Naive thymus-derived CD4-positive, alpha-beta T cell (primary cell): ENCODE measurements at regions of chr14 and their contacts with region 1.

Region 1: DNA sequence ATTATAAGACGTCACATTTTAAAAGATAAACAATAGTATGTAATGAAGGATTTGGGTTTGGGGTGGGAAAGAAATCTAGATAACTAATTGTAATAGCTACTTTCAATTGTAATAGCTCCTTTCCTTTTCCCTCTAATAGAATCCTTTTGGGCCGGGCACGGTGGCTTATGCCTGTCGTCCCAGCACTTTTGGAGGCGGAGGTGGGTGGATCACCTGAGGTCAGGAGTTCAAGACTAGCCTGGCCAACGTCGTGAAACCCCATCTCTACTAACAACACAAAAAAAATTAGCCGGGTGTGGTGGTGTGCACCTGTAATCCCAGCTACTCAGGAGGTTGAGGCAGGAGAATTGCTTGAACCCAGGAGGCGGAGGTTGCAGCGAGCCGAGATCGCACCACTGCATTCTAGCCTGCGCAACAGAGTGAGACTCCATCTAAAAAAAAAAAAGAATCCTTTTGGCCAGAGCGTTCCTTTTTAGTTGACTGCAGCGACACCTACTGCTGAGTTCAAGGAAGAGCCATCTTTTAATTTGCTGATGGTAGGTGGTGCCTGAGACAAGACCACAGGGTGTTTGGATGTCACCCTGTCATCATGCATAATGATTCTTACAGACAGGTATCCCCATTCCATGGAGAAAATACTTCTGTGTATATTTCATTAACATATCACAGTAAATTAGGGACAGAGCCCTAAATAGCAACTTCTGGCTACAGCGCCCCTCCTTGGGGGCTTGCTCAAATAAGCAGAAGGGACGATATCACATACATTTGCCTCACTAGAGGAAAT is 79.5 kb downstream of the ARMH4 start:
- DNase-seq: peak in 8 of 9 donors; percentile 3 to 52 (median 36)
- ATAC-seq: peak; percentile 78
- H3K4me3 ChIP-seq: no peak overlapping the region
- H3K4me3 Mint-ChIP-seq: peak overlapping the region in 2 of 10 donors; percentile 40 to 52
- H3K27ac ChIP-seq: no peak overlapping the region
- H3K27ac Mint-ChIP-seq: no peak overlapping the region
- H3K4me1 ChIP-seq: no peaks in the 10 kb centered on the region
- H3K4me1 Mint-ChIP-seq: no peaks in the 10 kb centered on the region
- H3K27me3 ChIP-seq: no peaks in the 10 kb centered on the region
- H3K27me3 Mint-ChIP-seq: peaks cover 4 to 17% (median 9%) of the 10 kb centered on the region in 5 donors

Region 2: GRCh38 chr14:57486767-57487379 is 585.6 kb before region 1 on chr14:
- CTCF ChIA-PET with region 1: no interaction called
- POLR2A ChIA-PET with region 1: no interaction called
- intact Hi-C with region 1: loop called in 1 of 2 experiments (anchors 1 kb)
- DNase-seq: peak in 2 of 9 donors; percentile 1 to 2
- ATAC-seq: no peak
- H3K4me3 ChIP-seq: no peak overlapping the region
- H3K4me3 Mint-ChIP-seq: no peak overlapping the region
- H3K27ac ChIP-seq: no peak overlapping the region
- H3K27ac Mint-ChIP-seq: no peak overlapping the region
- H3K4me1 ChIP-seq: no peaks in the 10 kb centered on the region
- H3K4me1 Mint-ChIP-seq: peaks cover 0 to 3% (median 0%) of the 10 kb centered on the region in 7 donors
- H3K27me3 ChIP-seq: no peaks in the 10 kb centered on the region
- H3K27me3 Mint-ChIP-seq: peaks cover 2 to 8% (median 6%) of the 10 kb centered on the region in 5 donors

Region 3: GRCh38 chr14:57533214-57533613 is 539.3 kb before region 1 on chr14:
- CTCF ChIA-PET with region 1: no interaction called
- POLR2A ChIA-PET with region 1: no interaction called
- intact Hi-C with region 1: loop called in 1 of 2 experiments (anchors 2 kb)
- DNase-seq: no peak
- ATAC-seq: no peak
- H3K4me3 ChIP-seq: no peak overlapping the region
- H3K4me3 Mint-ChIP-seq: no peak overlapping the region
- H3K27ac ChIP-seq: no peak overlapping the region
- H3K27ac Mint-ChIP-seq: no peak overlapping the region
- H3K4me1 ChIP-seq: no peaks in the 10 kb centered on the region
- H3K4me1 Mint-ChIP-seq: no peaks in the 10 kb centered on the region
- H3K27me3 ChIP-seq: no peaks in the 10 kb centered on the region
- H3K27me3 Mint-ChIP-seq: peaks cover 0 to 29% (median 14%) of the 10 kb centered on the region in 5 donors